ENCODE measurements at regions of chr1 and their contacts with region 1.

Region 1: DNA sequence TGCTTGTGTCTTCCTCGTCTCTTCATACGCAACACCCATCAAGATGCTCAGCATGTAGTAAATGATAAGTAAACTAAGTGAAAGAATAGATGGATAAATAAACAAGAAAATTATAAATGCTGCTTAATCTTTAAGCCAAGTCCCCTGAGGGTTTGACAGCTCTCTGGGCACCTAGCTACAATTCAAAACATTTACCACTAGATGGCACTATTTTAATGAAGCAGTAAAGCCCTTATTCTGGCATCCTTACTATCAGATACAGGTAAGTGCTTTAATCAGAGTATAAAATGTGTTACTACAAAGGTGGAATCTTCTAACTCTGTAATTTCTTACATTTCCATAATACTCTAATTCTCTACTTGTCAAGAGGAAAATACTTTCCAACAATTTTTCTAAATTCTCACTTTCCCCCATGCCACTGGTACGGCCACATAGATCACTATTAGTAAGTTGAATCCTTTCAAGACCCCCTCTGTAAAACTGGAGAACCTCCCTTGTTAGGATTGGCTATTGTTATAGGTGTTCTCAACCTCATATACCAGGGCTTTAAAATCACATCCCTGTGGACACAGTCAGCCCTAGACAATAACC is 137.8 kb downstream of the BARHL2 start:
- DNase-seq: no peak
- ATAC-seq: no peak
- H3K4me3 Mint-ChIP-seq: no peak overlapping the region
- H3K27ac Mint-ChIP-seq: no peak overlapping the region
- H3K4me1 Mint-ChIP-seq: no peaks in the 10 kb centered on the region
- H3K27me3 Mint-ChIP-seq: peaks cover 6% of the 10 kb centered on the region
- CTCF ChIP-seq: peak; percentile 58

Region 2: GRCh38 chr1:90616395-90616794 is 37.1 kb after region 1 on chr1:
- CTCF ChIA-PET with region 1: no interaction called
- POLR2A ChIA-PET with region 1: no interaction called
- intact Hi-C with region 1: no loop called
- DNase-seq: no peak
- ATAC-seq: no peak
- H3K4me3 Mint-ChIP-seq: no peak overlapping the region
- H3K27ac Mint-ChIP-seq: no peak overlapping the region
- H3K4me1 Mint-ChIP-seq: no peaks in the 10 kb centered on the region
- H3K27me3 Mint-ChIP-seq: no peaks in the 10 kb centered on the region
- CTCF ChIP-seq: no peak

Region 3: GRCh38 chr1:91404151-91405012 is 825.1 kb after region 1 on chr1 and contains the start of gene HFM1:
- CTCF ChIA-PET with region 1: no interaction called
- POLR2A ChIA-PET with region 1: no interaction called
- intact Hi-C with region 1: loop called (anchors 5 kb)
- DNase-seq: peak; percentile 45
- ATAC-seq: peak; percentile 97
- H3K4me3 Mint-ChIP-seq: peak within 1 kb of the TSS; percentile 80
- H3K27ac Mint-ChIP-seq: no peak within 1 kb of the TSS
- H3K4me1 Mint-ChIP-seq: peaks cover 10% of the 10 kb centered on the region
- H3K27me3 Mint-ChIP-seq: peaks cover 22% of the 10 kb centered on the region
- CTCF ChIP-seq: no peak
- total RNA-seq, gene HFM1: 0.07 and 0.29 TPM in 2 replicates